ENCODE measurements at regions of chr4 and their contacts with region 1.

Region 1: GRCh38 chr4:77240469-77241066 is 83.6 kb downstream of the CCNG2 start:
- DNase-seq: peak; percentile 35 to 78 (median 69)
- ATAC-seq: peak; percentile 68 to 83
- H3K4me3 ChIP-seq: no peak overlapping the region
- H3K27ac ChIP-seq: no peak overlapping the region
- H3K4me1 ChIP-seq: no peaks in the 10 kb centered on the region
- H3K27me3 ChIP-seq: no peaks in the 10 kb centered on the region

Region 2: GRCh38 chr4:77358315-77358928 is 117.9 kb after region 1 on chr4:
- intact Hi-C with region 1: loop called (anchors 5 kb)
- DNase-seq: no peak
- ATAC-seq: peak; percentile 46 to 59
- H3K4me3 ChIP-seq: no peak overlapping the region
- H3K27ac ChIP-seq: no peak overlapping the region
- H3K4me1 ChIP-seq: no peaks in the 10 kb centered on the region
- H3K27me3 ChIP-seq: no peaks in the 10 kb centered on the region

Measured in right cardiac atrium (tissue), 5 donors.